HAP-1 (cell line): ENCODE measurements at regions of chr2 and their contacts with region 1.

Region 1: GRCh38 chr2:43226558-43226954 is at the start of gene ZFP36L2:
- DNase-seq: peak; percentile 92 to 95
- H3K4me3 ChIP-seq: peak within 1 kb of the TSS; percentile 88
- H3K4me1 ChIP-seq: peaks cover 32% of the 10 kb centered on the region
- H3K27me3 ChIP-seq: no peaks in the 10 kb centered on the region

Region 2: GRCh38 chr2:42828487-42829425 is 397.8 kb before region 1 on chr2:
- in situ Hi-C with region 1: loop called (anchors 5 kb)
- DNase-seq: peak; percentile 89 to 90
- H3K4me3 ChIP-seq: no peak overlapping the region
- H3K4me1 ChIP-seq: peaks cover 25% of the 10 kb centered on the region
- H3K27me3 ChIP-seq: no peaks in the 10 kb centered on the region

Region 3: DNA sequence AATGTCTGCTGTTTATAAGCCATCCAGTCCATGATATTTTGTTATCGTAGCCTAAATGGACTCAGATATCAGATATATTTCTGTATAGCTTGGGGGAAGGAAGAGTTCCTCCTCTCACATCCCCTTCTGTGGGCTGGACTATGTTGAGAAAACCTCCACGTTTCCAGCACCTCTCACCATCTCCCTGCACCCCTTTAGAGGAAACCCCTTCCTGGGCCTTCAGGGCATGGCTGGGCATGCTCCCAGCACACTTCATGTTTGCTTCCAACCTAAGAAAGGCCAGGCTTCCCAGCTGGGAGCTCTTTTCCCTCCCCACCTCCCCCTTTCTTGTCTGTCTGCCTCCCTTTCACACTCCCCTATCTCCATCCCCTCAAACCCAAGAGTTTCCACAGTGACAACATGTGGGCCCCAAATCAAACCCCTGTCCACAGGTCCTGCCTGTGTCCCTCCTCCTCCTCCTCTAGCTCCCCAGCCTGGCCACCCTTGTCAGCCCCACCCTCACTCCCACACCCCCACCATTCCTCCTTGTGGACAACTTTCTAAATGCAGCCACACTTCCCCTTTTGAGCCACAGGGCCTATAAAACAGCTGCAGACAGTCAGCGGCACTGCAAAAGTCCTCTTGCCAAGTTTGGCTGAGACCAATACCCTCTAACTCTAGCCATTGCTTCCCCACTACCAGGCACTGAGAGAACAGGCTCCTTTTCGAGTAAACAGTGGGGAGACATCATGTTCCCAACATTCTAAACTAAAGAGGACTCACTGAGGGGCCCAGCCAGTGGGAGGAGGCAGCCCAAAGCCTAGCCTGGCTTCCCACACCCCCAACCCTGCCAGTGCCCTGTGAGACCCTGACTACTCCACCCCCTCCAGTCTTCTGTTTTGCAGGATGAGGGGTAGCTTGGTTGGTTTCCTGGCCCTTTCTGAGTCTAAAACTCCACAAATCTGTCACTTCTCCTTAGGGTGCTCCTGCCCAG is 120.7 kb before region 1 on chr2:
- in situ Hi-C with region 1: no loop called
- DNase-seq: no peak
- H3K4me3 ChIP-seq: no peak overlapping the region
- H3K4me1 ChIP-seq: no peaks in the 10 kb centered on the region
- H3K27me3 ChIP-seq: no peaks in the 10 kb centered on the region